ENCODE measurements at regions of chr6 and their contacts with region 1.

Region 1: GRCh38 chr6:24431045-24431451 is 28.3 kb downstream of the MRS2 start:
- DNase-seq: peak; percentile 39
- ATAC-seq: no peak
- H3K4me3 Mint-ChIP-seq: no peak overlapping the region
- H3K27ac Mint-ChIP-seq: no peak overlapping the region
- H3K4me1 Mint-ChIP-seq: no peaks in the 10 kb centered on the region
- H3K27me3 Mint-ChIP-seq: no peaks in the 10 kb centered on the region

Region 2: GRCh38 chr6:24402697-24403501 is 28.1 kb before region 1 on chr6 and contains the start of gene MRS2:
- CTCF ChIA-PET with region 1: no interaction called
- POLR2A ChIA-PET with region 1: no interaction called
- DNase-seq: peak; percentile 78
- ATAC-seq: peak; percentile 94
- H3K4me3 Mint-ChIP-seq: peak within 1 kb of the TSS; percentile 88
- H3K27ac Mint-ChIP-seq: peak within 1 kb of the TSS; percentile 70
- H3K4me1 Mint-ChIP-seq: peaks cover 31% of the 10 kb centered on the region
- H3K27me3 Mint-ChIP-seq: peaks cover 19% of the 10 kb centered on the region
- total RNA-seq, gene MRS2: 20.3 to 21.3 TPM

Region 3: GRCh38 chr6:24419526-24419925 is 11.5 kb before region 1 on chr6:
- CTCF ChIA-PET with region 1: interaction called, 22 read pairs
- POLR2A ChIA-PET with region 1: no interaction called
- DNase-seq: no peak
- ATAC-seq: no peak
- H3K4me3 Mint-ChIP-seq: no peak overlapping the region
- H3K27ac Mint-ChIP-seq: no peak overlapping the region
- H3K4me1 Mint-ChIP-seq: no peaks in the 10 kb centered on the region
- H3K27me3 Mint-ChIP-seq: no peaks in the 10 kb centered on the region

Region 4: GRCh38 chr6:24440897-24441598 is 10.0 kb after region 1 on chr6:
- CTCF ChIA-PET with region 1: interaction called, 36 read pairs
- POLR2A ChIA-PET with region 1: interaction called, 3 read pairs
- DNase-seq: no peak
- ATAC-seq: no peak
- H3K4me3 Mint-ChIP-seq: no peak overlapping the region
- H3K27ac Mint-ChIP-seq: no peak overlapping the region
- H3K4me1 Mint-ChIP-seq: peaks cover 7% of the 10 kb centered on the region
- H3K27me3 Mint-ChIP-seq: no peaks in the 10 kb centered on the region

Region 5: DNA sequence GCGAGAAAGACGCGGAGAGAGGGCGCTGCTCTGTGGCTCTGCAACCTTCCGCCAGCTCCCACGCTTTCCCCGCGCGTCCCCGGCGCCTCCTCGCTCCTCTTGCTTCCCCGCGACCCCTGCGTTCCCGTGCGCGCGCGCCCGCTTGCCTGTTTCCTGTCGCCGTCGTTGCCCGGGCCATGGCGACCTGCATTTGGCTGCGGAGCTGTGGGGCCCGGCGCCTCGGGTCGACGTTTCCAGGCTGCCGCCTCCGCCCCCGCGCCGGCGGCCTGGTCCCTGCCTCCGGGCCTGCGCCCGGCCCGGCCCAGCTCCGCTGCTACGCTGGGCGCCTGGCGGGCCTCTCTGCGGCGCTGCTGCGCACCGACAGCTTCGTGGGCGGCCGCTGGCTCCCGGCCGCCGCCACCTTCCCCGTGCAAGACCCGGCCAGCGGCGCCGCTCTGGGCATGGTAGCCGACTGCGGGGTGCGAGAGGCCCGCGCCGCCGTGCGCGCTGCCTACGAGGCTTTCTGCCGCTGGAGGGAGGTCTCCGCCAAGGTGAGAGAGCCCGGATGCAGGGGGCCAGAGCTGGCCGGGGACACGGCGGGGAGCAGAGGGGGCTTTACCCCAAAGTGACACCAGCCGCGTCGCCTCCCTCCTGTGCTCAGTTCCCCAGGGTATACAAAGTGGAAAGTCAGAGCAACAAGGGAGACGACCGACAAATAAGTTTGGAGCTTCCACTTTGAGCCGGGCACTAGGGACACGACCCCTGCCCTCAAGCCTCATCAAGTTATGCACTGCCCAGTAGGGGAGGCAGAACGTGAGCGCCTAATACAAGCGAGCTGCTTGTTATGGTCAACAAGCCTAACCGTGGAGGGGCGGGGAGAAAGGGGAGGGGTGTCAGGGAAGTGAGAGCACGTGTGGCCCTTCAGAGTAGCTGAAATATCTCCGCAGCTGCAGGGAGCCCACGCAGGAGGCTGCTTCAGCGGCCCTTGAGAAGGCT is 64.1 kb after region 1 on chr6 and contains the start of gene ALDH5A1:
- CTCF ChIA-PET with region 1: interaction called, 12 read pairs
- POLR2A ChIA-PET with region 1: no interaction called
- DNase-seq: peak; percentile 80
- ATAC-seq: peak; percentile 87
- H3K4me3 Mint-ChIP-seq: peak within 1 kb of the TSS; percentile 74
- H3K27ac Mint-ChIP-seq: peak within 1 kb of the TSS; percentile 25
- H3K4me1 Mint-ChIP-seq: peaks cover 14% of the 10 kb centered on the region
- H3K27me3 Mint-ChIP-seq: no peaks in the 10 kb centered on the region
- total RNA-seq, gene ALDH5A1: 4.8 to 4.9 TPM